PC-9 (cell line): ENCODE measurements at regions of chr3 and their contacts with region 1.

Region 1: DNA sequence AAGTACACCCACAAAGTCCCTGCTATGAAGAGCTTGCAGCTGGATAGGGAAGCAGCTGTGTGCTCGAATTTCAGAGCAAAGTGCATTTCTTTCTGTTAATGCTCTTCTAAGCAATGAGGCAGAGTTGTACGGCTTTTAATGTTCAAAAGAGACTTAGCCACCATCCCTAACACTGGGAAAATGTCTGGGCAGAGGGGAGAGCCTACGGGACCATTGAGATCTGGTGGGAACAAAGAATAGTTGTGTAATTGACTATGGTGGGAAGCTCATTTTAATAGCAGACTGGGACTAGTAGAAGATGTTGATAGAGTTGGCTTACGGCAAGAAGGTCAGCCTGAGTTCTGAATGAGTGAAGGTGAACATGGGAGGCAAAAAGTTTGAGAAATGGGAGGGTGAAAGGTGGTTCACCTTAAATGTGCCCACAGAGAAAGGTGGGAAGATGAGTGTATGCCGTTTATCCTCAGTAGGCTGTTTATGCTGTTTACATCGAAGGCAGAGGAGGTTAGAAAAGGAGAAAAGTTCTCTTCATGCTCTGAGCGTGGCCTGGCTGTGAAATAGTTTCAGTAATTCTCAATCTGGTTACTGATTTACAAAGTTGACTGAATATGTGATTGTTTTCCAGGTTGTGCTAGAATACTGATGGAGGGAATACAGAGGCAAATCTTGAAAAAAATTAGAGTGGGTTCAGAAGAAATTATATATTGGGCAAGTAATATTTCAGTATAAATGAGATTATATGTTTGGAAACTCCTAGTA is 22.9 kb upstream of the UTS2B start:
- DNase-seq: no peak
- H3K4me3 ChIP-seq: no peak overlapping the region
- H3K27ac ChIP-seq: no peak overlapping the region
- H3K4me1 ChIP-seq: peaks cover 25% of the 10 kb centered on the region
- H3K27me3 ChIP-seq: no peaks in the 10 kb centered on the region
- CTCF ChIP-seq: no peak

Region 2: DNA sequence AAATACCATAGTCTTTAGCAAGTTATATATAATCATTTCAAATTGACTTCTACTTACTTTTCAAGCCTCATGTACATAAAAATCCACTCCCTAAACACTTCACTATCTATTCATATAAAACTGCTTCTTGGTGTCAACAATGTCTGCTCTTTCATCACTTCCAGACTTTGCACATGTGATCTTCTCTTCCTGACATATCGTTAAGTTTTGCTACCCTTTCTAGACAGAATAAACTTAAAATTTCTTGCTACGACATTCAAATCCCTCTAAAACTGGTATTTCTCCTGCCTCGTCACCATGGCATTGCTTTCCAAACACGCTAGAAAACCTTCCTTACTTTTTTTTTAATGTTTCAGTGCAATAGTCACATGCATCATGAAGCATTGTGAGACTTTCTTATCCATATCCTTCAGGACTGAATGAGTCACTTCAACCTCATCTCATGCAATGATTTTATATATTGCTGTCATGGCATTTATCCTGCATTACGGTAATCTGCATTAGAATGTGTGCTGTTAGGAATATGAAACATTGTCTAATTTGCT is 613.5 kb before region 1 on chr3:
- CTCF ChIA-PET with region 1: no interaction called
- POLR2A ChIA-PET with region 1: no interaction called
- intact Hi-C with region 1: no loop called
- DNase-seq: no peak
- H3K4me3 ChIP-seq: no peak overlapping the region
- H3K27ac ChIP-seq: no peak overlapping the region
- H3K4me1 ChIP-seq: no peaks in the 10 kb centered on the region
- H3K27me3 ChIP-seq: no peaks in the 10 kb centered on the region
- CTCF ChIP-seq: no peak

Region 3: DNA sequence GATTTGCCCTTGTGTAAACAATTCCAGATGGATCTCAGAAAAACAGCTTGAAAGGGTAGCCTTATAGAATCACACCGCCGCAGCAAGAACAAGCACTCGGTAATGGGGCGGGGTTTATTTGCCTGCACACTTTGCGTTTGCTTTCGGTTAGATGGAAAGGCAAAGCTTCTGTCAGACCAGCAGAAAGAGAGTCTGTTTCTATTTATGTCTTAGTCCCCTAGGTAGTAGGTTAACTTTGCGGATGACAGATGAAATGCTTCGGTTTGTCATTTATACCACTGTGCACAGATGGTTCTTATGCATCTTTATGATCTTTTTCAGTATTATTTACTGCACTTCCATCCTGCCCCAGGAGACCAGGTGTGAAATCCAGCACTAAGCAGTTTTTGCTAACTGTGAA is 169.9 kb after region 1 on chr3:
- CTCF ChIA-PET with region 1: no interaction called
- POLR2A ChIA-PET with region 1: interaction called, 11 read pairs
- intact Hi-C with region 1: no loop called
- DNase-seq: no peak
- H3K4me3 ChIP-seq: no peak overlapping the region
- H3K27ac ChIP-seq: no peak overlapping the region
- H3K4me1 ChIP-seq: no peaks in the 10 kb centered on the region
- H3K27me3 ChIP-seq: no peaks in the 10 kb centered on the region
- CTCF ChIP-seq: no peak

Region 4: GRCh38 chr3:191715585-191715984 is 362.4 kb after region 1 on chr3:
- CTCF ChIA-PET with region 1: no interaction called
- POLR2A ChIA-PET with region 1: no interaction called
- intact Hi-C with region 1: no loop called
- DNase-seq: no peak
- H3K4me3 ChIP-seq: no peak overlapping the region
- H3K27ac ChIP-seq: no peak overlapping the region
- H3K4me1 ChIP-seq: no peaks in the 10 kb centered on the region
- H3K27me3 ChIP-seq: no peaks in the 10 kb centered on the region
- CTCF ChIP-seq: no peak